ENCODE measurements at regions of chr10 and their contacts with region 1.

Region 1: DNA sequence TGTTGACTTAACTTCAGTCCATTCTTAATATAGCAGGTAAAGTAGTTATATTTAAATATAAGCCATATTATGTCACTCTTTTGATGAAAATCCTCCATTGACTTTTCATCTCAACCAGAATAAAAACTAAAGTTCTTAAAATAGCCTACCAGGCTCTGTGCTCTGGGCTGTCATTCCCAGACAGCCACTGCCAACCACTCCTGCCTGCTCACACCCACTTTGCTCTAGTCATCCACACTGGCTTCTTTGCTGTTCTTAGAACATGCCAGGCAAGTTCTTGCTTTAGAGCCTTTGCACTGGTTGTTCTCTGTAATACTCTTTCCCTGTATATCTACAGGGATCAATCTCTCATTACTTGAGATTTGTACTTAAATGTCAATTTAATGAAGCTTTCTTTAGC is 80.6 kb downstream of the ZEB1 start:
- DNase-seq: peak; percentile 27 to 51
- ATAC-seq: peak; percentile 78 to 98 (median 92)
- H3K4me3 ChIP-seq: peak overlapping the region in 4 of 10 donors; percentile 0 to 10 (median 2)
- H3K27ac ChIP-seq: peak overlapping the region in 8 of 10 donors; percentile 32 to 77 (median 68)
- H3K4me1 ChIP-seq: peaks cover 0 to 98% (median 72%) of the 10 kb centered on the region in 9 donors
- H3K27me3 ChIP-seq: no peaks in the 10 kb centered on the region
- CTCF ChIP-seq: no peak

Region 2: GRCh38 chr10:31467796-31468535 is 68.3 kb after region 1 on chr10:
- intact Hi-C with region 1: loop called in 1 of 10 experiments (anchors 10 kb)
- DNase-seq: peak in 1 of 2 donors; percentile 9
- ATAC-seq: peak in 7 of 8 donors; percentile 25 to 71 (median 64)
- H3K4me3 ChIP-seq: no peak overlapping the region
- H3K27ac ChIP-seq: no peak overlapping the region
- H3K4me1 ChIP-seq: no peaks in the 10 kb centered on the region
- H3K27me3 ChIP-seq: no peaks in the 10 kb centered on the region
- CTCF ChIP-seq: peak; percentile 20 to 60 (median 51)

Region 3: DNA sequence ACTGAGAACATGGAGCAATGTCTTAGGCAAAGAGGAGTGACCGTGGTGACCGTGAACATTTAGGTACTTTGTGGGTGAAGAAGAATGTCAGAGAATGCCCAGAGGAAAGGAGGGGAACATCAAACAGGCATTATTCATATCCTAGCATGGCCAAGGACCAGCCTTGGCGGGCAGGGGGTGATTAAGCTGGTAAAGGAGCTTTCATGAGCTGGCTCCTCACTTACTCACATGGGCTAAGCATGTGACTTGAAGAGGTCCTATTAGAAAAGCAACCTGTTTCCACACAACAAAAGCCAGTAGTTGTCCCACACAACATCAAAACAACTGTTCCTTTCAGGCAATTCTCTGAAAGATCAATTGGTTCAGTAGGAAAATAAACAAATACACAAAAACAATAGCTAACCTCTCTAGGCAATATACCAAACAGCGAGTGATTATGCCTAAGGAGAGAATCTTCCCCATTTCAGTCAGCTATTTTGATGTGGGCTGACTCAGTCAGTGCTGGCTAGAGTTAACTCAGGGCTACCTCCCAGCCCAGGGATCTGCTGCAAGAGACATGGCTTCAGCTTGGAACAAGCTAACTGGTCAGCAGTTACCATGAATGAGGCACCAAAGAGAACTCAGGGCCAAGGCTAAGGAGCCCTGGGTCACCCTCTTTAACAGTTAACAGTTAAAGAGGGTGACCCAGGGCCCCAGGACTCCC is 245.5 kb after region 1 on chr10:
- intact Hi-C with region 1: no loop called
- DNase-seq: no peak
- ATAC-seq: no peak
- H3K4me3 ChIP-seq: no peak overlapping the region
- H3K27ac ChIP-seq: no peak overlapping the region
- H3K4me1 ChIP-seq: peaks cover 3 to 20% (median 16%) of the 10 kb centered on the region in 9 donors
- H3K27me3 ChIP-seq: no peaks in the 10 kb centered on the region
- CTCF ChIP-seq: no peak

Measured in heart right ventricle (tissue), 16 donors.